MCF 10A (cell line): ENCODE measurements at regions of chr3 and their contacts with region 1.

Region 1: DNA sequence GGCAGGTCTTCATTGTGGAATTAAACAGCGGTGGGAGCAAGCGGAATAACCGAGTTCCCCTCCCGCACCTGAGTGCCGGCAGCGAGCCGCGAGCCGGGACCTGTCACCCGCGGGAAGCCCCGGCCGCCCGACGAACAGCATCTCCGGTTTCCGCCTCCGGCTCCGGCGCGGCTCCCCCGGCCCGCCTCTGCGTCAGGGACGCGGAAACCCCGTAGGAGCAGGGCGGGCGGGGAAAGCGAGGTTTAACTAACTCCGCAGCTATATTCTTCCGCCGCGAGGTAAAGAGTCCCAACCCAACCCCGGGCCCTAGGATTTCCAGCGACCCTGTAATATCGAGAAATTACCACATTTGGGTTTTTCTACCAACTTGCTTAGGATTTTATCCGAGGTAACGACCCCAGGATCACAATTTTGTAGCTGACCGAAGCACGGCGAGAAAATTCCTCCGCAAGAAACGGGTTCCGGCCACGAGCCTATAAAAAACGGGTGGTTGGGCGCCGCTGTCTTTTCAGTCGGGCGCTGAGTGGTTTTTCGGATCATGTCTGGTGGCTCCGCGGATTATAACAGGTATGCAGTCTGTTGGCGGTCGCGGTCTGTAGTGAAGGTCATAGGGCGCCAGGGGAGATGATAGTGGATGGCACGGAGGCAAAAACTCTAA is at the start of gene EIF4A2:
- DNase-seq: peak; percentile 88
- H3K4me3 Mint-ChIP-seq: peak within 1 kb of the TSS; percentile 93
- H3K27ac Mint-ChIP-seq: peak within 1 kb of the TSS; percentile 99
- H3K4me1 Mint-ChIP-seq: peaks cover 21% of the 10 kb centered on the region
- H3K27me3 Mint-ChIP-seq: no peaks in the 10 kb centered on the region
- CTCF ChIP-seq: no peak
- total RNA-seq, gene EIF4A2: 183 and 202 TPM in 2 replicates

Region 2: DNA sequence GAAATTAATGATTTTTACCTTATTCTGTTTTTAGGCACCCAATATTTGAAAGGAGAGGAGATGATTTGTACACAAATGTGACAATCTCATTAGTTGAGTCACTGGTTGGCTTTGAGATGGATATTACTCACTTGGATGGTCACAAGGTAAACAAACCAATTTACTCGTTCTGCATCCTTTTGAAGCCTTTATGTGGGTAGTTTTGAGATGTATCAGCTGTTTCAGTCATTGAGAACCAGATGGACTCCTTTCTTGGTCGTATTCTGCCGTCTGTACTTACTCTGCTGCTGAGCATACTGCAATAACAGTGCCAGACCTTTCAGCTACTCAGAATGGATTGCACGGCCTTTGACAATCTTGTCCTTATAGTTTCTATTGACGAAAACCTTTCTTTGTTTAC is 199.4 kb before region 1 on chr3:
- CTCF ChIA-PET with region 1: interaction called, 3 read pairs
- POLR2A ChIA-PET with region 1: interaction called, 42 read pairs
- intact Hi-C with region 1: no loop called
- DNase-seq: no peak
- H3K4me3 Mint-ChIP-seq: no peak overlapping the region
- H3K27ac Mint-ChIP-seq: no peak overlapping the region
- H3K4me1 Mint-ChIP-seq: peaks cover 8% of the 10 kb centered on the region
- H3K27me3 Mint-ChIP-seq: no peaks in the 10 kb centered on the region
- CTCF ChIP-seq: no peak

Region 3: GRCh38 chr3:186617038-186617946 is 165.9 kb before region 1 on chr3:
- CTCF ChIA-PET with region 1: interaction called, 37 read pairs
- POLR2A ChIA-PET with region 1: interaction called, 182 read pairs
- intact Hi-C with region 1: loop called (anchors 1 kb)
- DNase-seq: peak; percentile 99
- H3K4me3 Mint-ChIP-seq: peak overlapping the region; percentile 72
- H3K27ac Mint-ChIP-seq: peak overlapping the region; percentile 71
- H3K4me1 Mint-ChIP-seq: peaks cover 25% of the 10 kb centered on the region
- H3K27me3 Mint-ChIP-seq: no peaks in the 10 kb centered on the region
- CTCF ChIP-seq: peak; percentile 85

Region 4: DNA sequence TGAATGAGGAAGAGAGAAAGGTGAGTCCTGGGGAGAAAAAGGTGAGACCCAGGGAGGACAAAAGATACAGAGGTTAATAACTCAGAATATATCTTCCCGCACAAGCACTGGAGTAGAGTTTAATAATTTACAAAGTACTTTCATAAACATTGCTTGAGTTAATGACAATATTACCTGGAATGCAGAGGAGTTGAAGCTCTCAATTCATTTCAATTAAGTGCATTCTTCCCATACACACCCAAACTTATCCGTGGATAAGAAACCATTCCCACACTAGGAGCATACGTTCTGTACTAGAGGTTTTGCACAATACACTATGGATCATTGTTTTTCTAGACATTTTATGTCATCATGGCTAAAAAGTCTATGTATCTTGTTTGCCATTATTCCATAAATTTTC is 89.4 kb before region 1 on chr3:
- CTCF ChIA-PET with region 1: no interaction called
- POLR2A ChIA-PET with region 1: interaction called, 13 read pairs
- intact Hi-C with region 1: no loop called
- DNase-seq: no peak
- H3K4me3 Mint-ChIP-seq: no peak overlapping the region
- H3K27ac Mint-ChIP-seq: no peak overlapping the region
- H3K4me1 Mint-ChIP-seq: no peaks in the 10 kb centered on the region
- H3K27me3 Mint-ChIP-seq: no peaks in the 10 kb centered on the region
- CTCF ChIP-seq: no peak

Region 5: GRCh38 chr3:186760141-186760813 is 22.9 kb before region 1 on chr3:
- CTCF ChIA-PET with region 1: no interaction called
- POLR2A ChIA-PET with region 1: interaction called, 82 read pairs
- intact Hi-C with region 1: no loop called
- DNase-seq: peak; percentile 50
- H3K4me3 Mint-ChIP-seq: no peak overlapping the region
- H3K27ac Mint-ChIP-seq: no peak overlapping the region
- H3K4me1 Mint-ChIP-seq: peaks cover 5% of the 10 kb centered on the region
- H3K27me3 Mint-ChIP-seq: no peaks in the 10 kb centered on the region
- CTCF ChIP-seq: no peak

Region 6: GRCh38 chr3:186806089-186807055 is 23.2 kb after region 1 on chr3 and contains the start of gene RFC4:
- CTCF ChIA-PET with region 1: interaction called, 3 read pairs
- POLR2A ChIA-PET with region 1: interaction called, 102 read pairs
- intact Hi-C with region 1: loop called (anchors 2 kb)
- DNase-seq: peak; percentile 77
- H3K4me3 Mint-ChIP-seq: peak within 1 kb of the TSS; percentile 79
- H3K27ac Mint-ChIP-seq: peak within 1 kb of the TSS; percentile 83
- H3K4me1 Mint-ChIP-seq: peaks cover 6% of the 10 kb centered on the region
- H3K27me3 Mint-ChIP-seq: no peaks in the 10 kb centered on the region
- CTCF ChIP-seq: no peak
- total RNA-seq, gene RFC4: 23.9 and 33.2 TPM in 2 replicates

Region 7: GRCh38 chr3:186988806-186989205 is 205.6 kb after region 1 on chr3:
- CTCF ChIA-PET with region 1: no interaction called
- POLR2A ChIA-PET with region 1: no interaction called
- intact Hi-C with region 1: no loop called
- DNase-seq: no peak
- H3K4me3 Mint-ChIP-seq: no peak overlapping the region
- H3K27ac Mint-ChIP-seq: peak overlapping the region; percentile 24
- H3K4me1 Mint-ChIP-seq: peaks cover 16% of the 10 kb centered on the region
- H3K27me3 Mint-ChIP-seq: no peaks in the 10 kb centered on the region
- CTCF ChIP-seq: no peak